IMR-90 (cell line): ENCODE measurements at regions of chr10 and their contacts with region 1.

Region 1: DNA sequence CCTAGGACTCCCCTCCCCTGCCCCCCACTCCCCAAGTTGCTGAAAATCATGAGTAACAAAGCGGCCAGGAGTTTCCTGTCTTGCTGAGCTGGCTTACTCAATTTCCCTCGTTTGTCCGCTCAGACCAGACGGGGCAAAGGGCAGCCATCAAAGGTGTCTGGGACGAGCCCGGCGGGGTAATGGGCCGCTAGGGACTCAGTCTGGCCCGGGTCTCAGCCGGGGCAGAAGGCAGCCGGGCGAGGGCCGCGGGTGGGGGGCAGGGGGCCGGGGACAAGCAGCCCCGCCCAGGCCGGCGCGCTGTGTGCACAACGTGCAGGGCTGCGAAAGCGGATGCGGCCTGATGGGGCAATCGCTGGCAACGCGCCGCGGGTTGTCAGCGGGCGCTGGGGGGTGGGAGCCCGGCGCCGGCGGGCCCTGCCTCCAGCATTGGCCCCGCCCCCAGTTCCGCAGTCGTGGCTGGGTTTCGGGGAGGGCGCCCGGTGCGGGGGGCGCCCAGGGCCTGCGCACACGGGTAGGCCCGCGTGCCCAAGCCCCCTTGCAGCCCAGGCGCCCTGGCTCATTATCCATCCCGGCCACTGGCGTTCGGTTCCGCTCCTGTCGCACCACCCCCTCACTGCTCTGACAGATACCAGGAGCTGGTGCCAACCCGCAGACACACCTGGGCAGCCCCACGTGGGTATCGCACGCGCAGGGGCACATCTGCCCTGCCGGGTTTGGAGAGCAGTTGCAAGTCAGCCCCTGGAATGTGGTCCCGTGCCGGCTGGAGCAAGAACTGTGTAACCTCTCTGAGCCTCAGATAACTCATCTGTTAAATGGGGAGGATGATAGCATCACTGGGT is 35.1 kb downstream of the DNAJB12 start:
- DNase-seq: peak; percentile 89
- ATAC-seq: peak; percentile 78
- H3K4me3 ChIP-seq: peak overlapping the region; percentile 41
- H3K27ac ChIP-seq: peak overlapping the region; percentile 99
- H3K4me1 ChIP-seq: peaks cover 42% of the 10 kb centered on the region
- H3K27me3 ChIP-seq: no peaks in the 10 kb centered on the region
- CTCF ChIP-seq: no peak
- POLR2A ChIP-seq: peak; percentile 47; the same call in 1 of the 2 replicates
- RAD21 ChIP-seq: no peak

Region 2: DNA sequence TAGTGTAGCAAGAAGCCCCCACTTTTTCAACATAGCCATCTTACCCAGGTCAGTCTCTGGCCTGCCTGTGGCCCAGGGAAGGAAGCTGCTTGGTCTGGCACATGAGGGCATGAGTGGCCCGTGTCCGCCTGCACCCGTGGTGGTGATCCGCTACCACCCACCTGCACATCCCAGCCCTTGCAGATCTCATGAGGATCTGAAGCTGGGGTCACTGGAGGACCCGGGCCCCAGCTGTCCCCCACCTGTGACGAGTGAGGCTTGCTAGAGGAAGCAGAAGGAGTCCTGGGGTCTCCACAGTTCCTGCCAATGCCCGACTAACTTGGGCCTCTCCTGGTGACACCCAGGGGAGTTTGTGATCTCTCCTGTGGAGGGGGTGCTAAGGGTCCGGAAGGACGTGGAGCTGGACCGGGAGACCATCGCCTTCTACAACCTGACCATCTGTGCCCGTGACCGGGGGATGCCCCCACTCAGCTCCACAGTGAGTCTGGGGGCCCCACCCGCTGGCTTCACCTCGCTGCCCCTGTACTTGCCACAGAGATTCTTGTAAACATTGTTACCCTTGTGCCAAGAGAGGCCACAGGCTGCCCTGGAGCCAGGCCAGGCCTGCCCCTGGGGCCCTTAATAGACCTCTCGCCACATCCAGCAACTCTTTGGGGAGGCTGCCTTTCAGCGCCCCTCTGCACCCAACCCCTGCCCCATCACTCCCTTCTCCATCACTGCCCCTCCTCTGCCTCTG is 535.5 kb before region 1 on chr10:
- CTCF ChIA-PET with region 1: no interaction called
- POLR2A ChIA-PET with region 1: interaction called, 16 read pairs
- dilution Hi-C with region 1: no loop called
- in situ Hi-C with region 1: no loop called
- intact Hi-C with region 1: no loop called
- DNase-seq: no peak
- ATAC-seq: no peak
- H3K4me3 ChIP-seq: no peak overlapping the region
- H3K27ac ChIP-seq: no peak overlapping the region
- H3K4me1 ChIP-seq: no peaks in the 10 kb centered on the region
- H3K27me3 ChIP-seq: peaks cover 64% of the 10 kb centered on the region
- CTCF ChIP-seq: no peak
- POLR2A ChIP-seq: no peak
- RAD21 ChIP-seq: no peak

Region 3: GRCh38 chr10:71963756-71964668 is 355.6 kb before region 1 on chr10 and contains the start of gene CHST3:
- CTCF ChIA-PET with region 1: no interaction called
- POLR2A ChIA-PET with region 1: no interaction called
- dilution Hi-C with region 1: no loop called
- in situ Hi-C with region 1: loop called (anchors 10 kb)
- intact Hi-C with region 1: no loop called
- DNase-seq: peak; percentile 56
- ATAC-seq: peak; percentile 73
- H3K4me3 ChIP-seq: peak within 1 kb of the TSS; percentile 77
- H3K27ac ChIP-seq: peak within 1 kb of the TSS; percentile 74
- H3K4me1 ChIP-seq: peaks cover 13% of the 10 kb centered on the region
- H3K27me3 ChIP-seq: no peaks in the 10 kb centered on the region
- CTCF ChIP-seq: no peak
- POLR2A ChIP-seq: peak; percentile 8; the same call in 1 of the 2 replicates
- RAD21 ChIP-seq: no peak
- total RNA-seq, gene CHST3: 9.0 and 10.6 TPM in 2 replicates

Region 4: DNA sequence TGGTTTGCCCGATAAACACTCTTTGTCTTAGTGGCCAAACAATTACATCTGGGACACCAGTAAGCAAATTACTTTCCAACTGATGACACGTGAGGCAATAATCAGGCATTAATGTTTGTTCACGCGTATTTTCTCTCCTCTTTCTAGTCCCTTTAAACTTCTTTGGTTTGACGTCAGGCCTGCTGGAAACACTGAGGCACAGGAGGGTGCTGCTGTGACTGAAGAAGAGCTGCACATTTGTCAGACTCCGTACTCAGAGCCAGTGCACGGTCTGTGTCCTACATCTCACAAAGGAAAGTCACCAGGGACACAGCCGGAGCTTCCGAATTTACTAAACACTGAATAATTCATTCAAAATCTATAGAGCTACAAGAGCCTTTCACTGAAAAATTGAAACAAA is 161.5 kb before region 1 on chr10:
- CTCF ChIA-PET with region 1: no interaction called
- POLR2A ChIA-PET with region 1: no interaction called
- dilution Hi-C with region 1: no loop called
- in situ Hi-C with region 1: no loop called
- intact Hi-C with region 1: no loop called
- DNase-seq: no peak
- ATAC-seq: no peak
- H3K4me3 ChIP-seq: no peak overlapping the region
- H3K27ac ChIP-seq: no peak overlapping the region
- H3K4me1 ChIP-seq: no peaks in the 10 kb centered on the region
- H3K27me3 ChIP-seq: no peaks in the 10 kb centered on the region
- CTCF ChIP-seq: no peak
- POLR2A ChIP-seq: no peak
- RAD21 ChIP-seq: no peak

Region 5: GRCh38 chr10:72297968-72298773 is 21.5 kb before region 1 on chr10:
- CTCF ChIA-PET with region 1: no interaction called
- POLR2A ChIA-PET with region 1: interaction called, 7 read pairs
- dilution Hi-C with region 1: no loop called
- in situ Hi-C with region 1: no loop called
- intact Hi-C with region 1: loop called (anchors 1 kb)
- DNase-seq: peak; percentile 97
- ATAC-seq: peak; percentile 99
- H3K4me3 ChIP-seq: peak overlapping the region; percentile 48
- H3K27ac ChIP-seq: peak overlapping the region; percentile 85
- H3K4me1 ChIP-seq: peaks cover 10% of the 10 kb centered on the region
- H3K27me3 ChIP-seq: no peaks in the 10 kb centered on the region
- CTCF ChIP-seq: no peak
- POLR2A ChIP-seq: peak; percentile 75; the same call in 1 of the 2 replicates
- RAD21 ChIP-seq: no peak